ENCODE measurements at regions of chr13 and their contacts with region 1.

Region 1: DNA sequence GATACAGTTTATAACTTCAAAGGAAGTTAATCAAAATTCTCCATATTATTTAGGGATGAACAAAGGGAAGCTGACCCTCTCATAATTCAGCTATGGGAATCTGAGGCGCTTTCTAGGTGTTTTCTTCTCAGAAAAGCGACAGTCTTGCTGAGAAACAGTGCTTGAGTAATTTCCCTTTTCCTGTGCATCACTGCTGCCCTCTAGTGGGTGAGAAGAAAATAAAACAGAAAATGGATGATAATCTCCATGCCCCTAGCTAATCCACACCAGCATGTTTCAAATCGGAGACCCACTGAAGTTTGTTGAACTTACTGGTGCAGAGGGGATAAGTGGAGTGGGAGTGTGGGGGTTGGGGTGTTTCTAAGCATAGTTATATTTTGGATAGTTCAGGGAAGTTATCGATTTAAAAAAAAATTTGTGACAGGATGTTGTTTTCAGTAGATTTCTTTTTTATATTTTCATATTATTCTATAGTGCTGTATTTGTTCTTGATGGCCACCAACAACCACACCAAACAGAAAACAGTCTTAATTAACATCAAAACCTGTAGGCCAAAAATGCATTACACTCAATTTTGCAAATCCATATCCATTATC is 21.4 kb downstream of the LCP1 start:
- DNase-seq: peak; percentile 64
- ATAC-seq: peak; percentile 53
- H3K4me3 Mint-ChIP-seq: peak overlapping the region; percentile 71
- H3K27ac Mint-ChIP-seq: peak overlapping the region; percentile 91
- H3K4me1 Mint-ChIP-seq: peaks cover 63% of the 10 kb centered on the region
- H3K27me3 Mint-ChIP-seq: no peaks in the 10 kb centered on the region

Region 2: GRCh38 chr13:46126552-46127357 is 33.8 kb before region 1 on chr13:
- CTCF ChIA-PET with region 1: interaction called, 29 read pairs
- POLR2A ChIA-PET with region 1: interaction called, 3 read pairs
- DNase-seq: peak; percentile 78
- ATAC-seq: peak; percentile 77
- H3K4me3 Mint-ChIP-seq: no peak overlapping the region
- H3K27ac Mint-ChIP-seq: peak overlapping the region; percentile 56
- H3K4me1 Mint-ChIP-seq: peaks cover 35% of the 10 kb centered on the region
- H3K27me3 Mint-ChIP-seq: no peaks in the 10 kb centered on the region

Region 3: DNA sequence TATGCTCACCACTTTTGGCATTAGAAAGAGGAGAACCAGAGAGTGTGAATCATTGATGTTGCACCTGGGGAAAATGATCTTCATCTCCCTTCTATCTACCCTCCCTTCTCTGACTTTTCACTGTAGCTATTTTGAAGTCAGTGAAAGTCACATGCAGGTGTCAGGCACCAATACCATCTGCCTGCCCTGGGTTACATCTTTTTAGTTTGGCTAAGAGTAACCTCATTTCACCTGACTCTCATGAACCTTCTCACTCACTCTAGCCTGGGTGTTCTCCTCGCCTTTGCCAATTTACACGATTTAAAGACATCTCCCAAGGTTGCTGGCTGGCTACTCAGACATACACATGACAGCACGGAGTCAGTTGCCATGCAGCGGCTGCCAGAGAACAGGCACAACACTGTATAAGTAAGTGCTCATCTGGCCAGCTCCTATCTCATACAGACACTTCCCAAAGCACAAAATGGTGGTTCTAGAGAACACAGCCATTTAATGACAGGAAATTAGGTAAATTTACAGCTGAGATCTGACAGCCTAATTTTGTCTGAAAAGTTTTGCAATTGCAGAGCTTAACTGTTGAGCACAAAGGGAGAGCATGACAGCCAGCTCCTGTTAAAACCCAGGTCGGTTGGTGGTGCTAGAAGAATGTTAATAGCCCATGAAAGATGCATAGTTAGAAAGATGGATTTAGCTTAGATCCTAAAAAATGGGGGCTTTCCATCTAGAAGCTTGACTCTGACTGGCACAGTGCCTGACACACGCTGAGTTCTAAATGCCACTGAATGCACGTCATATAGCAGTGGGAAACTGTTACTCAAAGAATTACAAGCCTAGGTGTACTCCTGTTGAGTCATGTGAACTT is 11.1 kb before region 1 on chr13:
- CTCF ChIA-PET with region 1: interaction called, 37 read pairs
- POLR2A ChIA-PET with region 1: interaction called, 3 read pairs
- DNase-seq: no peak
- ATAC-seq: peak; percentile 23
- H3K4me3 Mint-ChIP-seq: no peak overlapping the region
- H3K27ac Mint-ChIP-seq: peak overlapping the region; percentile 75
- H3K4me1 Mint-ChIP-seq: peaks cover 29% of the 10 kb centered on the region
- H3K27me3 Mint-ChIP-seq: no peaks in the 10 kb centered on the region

Region 4: DNA sequence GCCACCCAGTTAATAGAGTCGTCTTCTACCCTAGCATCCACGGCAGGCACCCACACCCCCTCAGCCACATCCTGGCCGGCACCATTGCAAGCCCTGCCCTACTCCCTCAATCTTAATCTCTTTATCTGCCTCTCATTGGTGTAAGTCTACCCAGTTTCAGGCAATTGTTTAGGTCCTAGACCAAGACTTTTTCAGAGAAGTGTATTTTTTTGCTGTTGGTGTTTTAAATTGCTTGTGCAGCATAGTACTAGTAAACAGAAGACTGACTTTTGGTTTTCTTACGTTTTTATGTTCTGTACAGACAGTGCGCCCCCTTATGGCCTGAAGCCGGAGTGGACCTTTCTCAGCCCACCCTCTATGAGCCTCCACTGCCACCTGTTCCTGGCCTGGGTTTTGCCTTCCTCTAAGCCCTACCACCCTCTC is 23.7 kb after region 1 on chr13:
- CTCF ChIA-PET with region 1: interaction called, 37 read pairs
- POLR2A ChIA-PET with region 1: interaction called, 172 read pairs
- DNase-seq: peak; percentile 89
- ATAC-seq: peak; percentile 66
- H3K4me3 Mint-ChIP-seq: peak overlapping the region; percentile 90
- H3K27ac Mint-ChIP-seq: peak overlapping the region; percentile 98
- H3K4me1 Mint-ChIP-seq: peaks cover 38% of the 10 kb centered on the region
- H3K27me3 Mint-ChIP-seq: no peaks in the 10 kb centered on the region

Region 5: GRCh38 chr13:46267166-46267565 is 106.6 kb after region 1 on chr13:
- CTCF ChIA-PET with region 1: no interaction called
- POLR2A ChIA-PET with region 1: no interaction called
- DNase-seq: no peak
- ATAC-seq: no peak
- H3K4me3 Mint-ChIP-seq: no peak overlapping the region
- H3K27ac Mint-ChIP-seq: no peak overlapping the region
- H3K4me1 Mint-ChIP-seq: no peaks in the 10 kb centered on the region
- H3K27me3 Mint-ChIP-seq: peaks cover 4% of the 10 kb centered on the region

Region 6: DNA sequence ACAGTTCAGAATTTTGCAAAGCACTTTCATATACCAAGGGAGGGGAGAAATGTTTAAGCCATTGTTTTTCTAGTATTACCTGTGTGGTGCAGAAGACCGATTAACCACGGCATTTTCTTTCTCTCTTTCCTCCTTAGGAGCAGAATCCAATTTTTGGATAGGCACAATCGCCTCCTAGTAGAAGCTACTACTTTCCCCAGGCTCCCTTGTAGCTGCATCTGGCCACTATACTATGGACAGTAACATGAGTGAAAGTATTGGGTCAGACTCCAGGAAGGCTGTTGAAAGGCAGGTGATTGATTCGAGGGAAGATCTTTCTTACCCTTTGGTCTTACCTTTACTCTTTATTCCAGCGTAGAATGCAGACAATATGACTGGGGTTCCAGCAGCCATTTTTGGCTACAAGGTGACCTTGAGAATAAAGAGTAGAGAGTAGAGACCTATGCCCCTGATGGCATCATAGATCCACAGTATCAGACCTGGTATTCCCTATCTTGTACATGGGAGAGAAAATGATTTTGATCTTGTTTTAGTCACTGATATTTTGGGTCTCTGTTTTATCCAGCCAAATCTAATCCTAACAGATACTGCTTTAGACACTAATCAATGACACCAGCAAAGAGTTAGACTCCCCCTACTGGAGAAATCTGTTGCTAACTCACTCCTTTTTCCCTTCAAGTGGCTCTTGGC is 128.1 kb after region 1 on chr13:
- CTCF ChIA-PET with region 1: interaction called, 36 read pairs
- POLR2A ChIA-PET with region 1: no interaction called
- DNase-seq: peak; percentile 50
- ATAC-seq: peak; percentile 88
- H3K4me3 Mint-ChIP-seq: no peak overlapping the region
- H3K27ac Mint-ChIP-seq: peak overlapping the region; percentile 51
- H3K4me1 Mint-ChIP-seq: peaks cover 19% of the 10 kb centered on the region
- H3K27me3 Mint-ChIP-seq: no peaks in the 10 kb centered on the region